ENCODE measurements at regions of chr7 and their contacts with region 1.

Region 1: GRCh38 chr7:23298885-23299769 is at the start of gene MALSU1:
- DNase-seq: peak; percentile 90 to 99 (median 96)
- ATAC-seq: peak; percentile 99
- H3K4me3 ChIP-seq: peak within 1 kb of the TSS; percentile 83 to 96
- H3K4me3 Mint-ChIP-seq: peak within 1 kb of the TSS; percentile 80
- H3K27ac ChIP-seq: peak within 1 kb of the TSS; percentile 72 to 80
- H3K27ac Mint-ChIP-seq: peak within 1 kb of the TSS; percentile 95
- H3K4me1 ChIP-seq: peaks cover 22% of the 10 kb centered on the region
- H3K4me1 Mint-ChIP-seq: peaks cover 45% of the 10 kb centered on the region
- H3K27me3 ChIP-seq: no peaks in the 10 kb centered on the region
- H3K27me3 Mint-ChIP-seq: no peaks in the 10 kb centered on the region
- CTCF ChIP-seq: no peak
- total RNA-seq, gene MALSU1: 56.0 to 56.6 TPM

Region 2: DNA sequence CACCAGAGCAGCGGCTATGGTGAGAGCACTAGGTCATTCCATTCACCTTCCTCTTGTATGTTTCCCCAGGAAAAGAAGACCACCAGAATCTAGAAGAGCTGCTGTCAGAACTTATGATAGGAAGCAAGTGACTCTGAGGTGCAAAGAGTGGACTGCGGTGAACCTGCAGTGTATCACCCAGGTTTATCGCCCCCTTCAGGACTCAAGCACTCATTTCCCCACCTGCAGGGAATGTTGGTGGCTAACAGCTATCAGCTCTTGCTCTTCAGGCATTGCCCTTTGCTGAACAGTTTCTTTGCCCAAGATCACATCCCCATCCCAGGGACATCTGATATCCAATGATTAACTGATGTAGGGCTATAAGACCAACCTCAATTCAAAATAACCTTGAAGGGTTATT is 638.4 kb before region 1 on chr7:
- CTCF ChIA-PET with region 1: no interaction called
- POLR2A ChIA-PET with region 1: no interaction called
- intact Hi-C with region 1: no loop called
- DNase-seq: no peak
- ATAC-seq: no peak
- H3K4me3 ChIP-seq: no peak overlapping the region
- H3K4me3 Mint-ChIP-seq: no peak overlapping the region
- H3K27ac ChIP-seq: no peak overlapping the region
- H3K27ac Mint-ChIP-seq: no peak overlapping the region
- H3K4me1 ChIP-seq: no peaks in the 10 kb centered on the region
- H3K4me1 Mint-ChIP-seq: no peaks in the 10 kb centered on the region
- H3K27me3 ChIP-seq: no peaks in the 10 kb centered on the region
- H3K27me3 Mint-ChIP-seq: peaks cover 5% of the 10 kb centered on the region
- CTCF ChIP-seq: no peak

Region 3: GRCh38 chr7:23013715-23014649 is 285.1 kb before region 1 on chr7 and contains the start of gene HYCC1:
- CTCF ChIA-PET with region 1: no interaction called
- POLR2A ChIA-PET with region 1: no interaction called
- intact Hi-C with region 1: loop called (anchors 1 to 5 kb)
- DNase-seq: peak; percentile 97 to 99 (median 99)
- ATAC-seq: peak; percentile 97
- H3K4me3 ChIP-seq: peak within 1 kb of the TSS; percentile 65 to 95
- H3K4me3 Mint-ChIP-seq: peak within 1 kb of the TSS; percentile 97
- H3K27ac ChIP-seq: peak within 1 kb of the TSS; percentile 48 to 63
- H3K27ac Mint-ChIP-seq: peak within 1 kb of the TSS; percentile 89
- H3K4me1 ChIP-seq: peaks cover 21% of the 10 kb centered on the region
- H3K4me1 Mint-ChIP-seq: peaks cover 20% of the 10 kb centered on the region
- H3K27me3 ChIP-seq: no peaks in the 10 kb centered on the region
- H3K27me3 Mint-ChIP-seq: peaks cover 3% of the 10 kb centered on the region
- CTCF ChIP-seq: peak; percentile 60
- total RNA-seq, gene HYCC1: 10.7 to 13.5 TPM

Region 4: GRCh38 chr7:23273141-23273599 is 26.0 kb before region 1 on chr7:
- CTCF ChIA-PET with region 1: interaction called, 18 read pairs
- POLR2A ChIA-PET with region 1: interaction called, 6 read pairs
- intact Hi-C with region 1: loop called in 1 of 2 experiments (anchors 1 kb)
- DNase-seq: peak; percentile 78 to 91 (median 89)
- ATAC-seq: peak; percentile 97
- H3K4me3 ChIP-seq: peak overlapping the region in 1 of 2 experiments; percentile 16
- H3K4me3 Mint-ChIP-seq: peak overlapping the region; percentile 70
- H3K27ac ChIP-seq: no peak overlapping the region
- H3K27ac Mint-ChIP-seq: no peak overlapping the region
- H3K4me1 ChIP-seq: no peaks in the 10 kb centered on the region
- H3K4me1 Mint-ChIP-seq: peaks cover 4% of the 10 kb centered on the region
- H3K27me3 ChIP-seq: no peaks in the 10 kb centered on the region
- H3K27me3 Mint-ChIP-seq: peaks cover 6% of the 10 kb centered on the region
- CTCF ChIP-seq: peak; percentile 82

Region 5: GRCh38 chr7:23531794-23532489 is 232.8 kb after region 1 on chr7 and contains the start of gene TRA2A:
- CTCF ChIA-PET with region 1: interaction called, 3 read pairs
- POLR2A ChIA-PET with region 1: no interaction called
- intact Hi-C with region 1: loop called (anchors 1 to 5 kb)
- DNase-seq: peak; percentile 93 to 98 (median 97)
- ATAC-seq: peak; percentile 89
- H3K4me3 ChIP-seq: peak within 1 kb of the TSS; percentile 94 to 100
- H3K4me3 Mint-ChIP-seq: peak within 1 kb of the TSS; percentile 99
- H3K27ac ChIP-seq: peak within 1 kb of the TSS; percentile 97 to 100
- H3K27ac Mint-ChIP-seq: peak within 1 kb of the TSS; percentile 100
- H3K4me1 ChIP-seq: peaks cover 31% of the 10 kb centered on the region
- H3K4me1 Mint-ChIP-seq: peaks cover 42% of the 10 kb centered on the region
- H3K27me3 ChIP-seq: no peaks in the 10 kb centered on the region
- H3K27me3 Mint-ChIP-seq: no peaks in the 10 kb centered on the region
- CTCF ChIP-seq: no peak
- total RNA-seq, gene TRA2A: 258 to 271 TPM

Region 6: GRCh38 chr7:25125137-25125946 is 1826.2 kb after region 1 on chr7 and contains the start of gene CYCS:
- CTCF ChIA-PET with region 1: no interaction called
- POLR2A ChIA-PET with region 1: no interaction called
- intact Hi-C with region 1: loop called in 1 of 2 experiments (anchors 5 kb)
- DNase-seq: peak; percentile 99 to 100 (median 99)
- ATAC-seq: peak; percentile 92
- H3K4me3 ChIP-seq: peak within 1 kb of the TSS; percentile 84 to 86
- H3K4me3 Mint-ChIP-seq: peak within 1 kb of the TSS; percentile 97
- H3K27ac ChIP-seq: peak within 1 kb of the TSS; percentile 96 to 97
- H3K27ac Mint-ChIP-seq: peak within 1 kb of the TSS; percentile 99
- H3K4me1 ChIP-seq: peaks cover 12% of the 10 kb centered on the region
- H3K4me1 Mint-ChIP-seq: peaks cover 22% of the 10 kb centered on the region
- H3K27me3 ChIP-seq: no peaks in the 10 kb centered on the region
- H3K27me3 Mint-ChIP-seq: no peaks in the 10 kb centered on the region
- CTCF ChIP-seq: no peak
- total RNA-seq, gene CYCS: 135 to 140 TPM